ENCODE measurements at regions of chr22 and their contacts with region 1.

Region 1: DNA sequence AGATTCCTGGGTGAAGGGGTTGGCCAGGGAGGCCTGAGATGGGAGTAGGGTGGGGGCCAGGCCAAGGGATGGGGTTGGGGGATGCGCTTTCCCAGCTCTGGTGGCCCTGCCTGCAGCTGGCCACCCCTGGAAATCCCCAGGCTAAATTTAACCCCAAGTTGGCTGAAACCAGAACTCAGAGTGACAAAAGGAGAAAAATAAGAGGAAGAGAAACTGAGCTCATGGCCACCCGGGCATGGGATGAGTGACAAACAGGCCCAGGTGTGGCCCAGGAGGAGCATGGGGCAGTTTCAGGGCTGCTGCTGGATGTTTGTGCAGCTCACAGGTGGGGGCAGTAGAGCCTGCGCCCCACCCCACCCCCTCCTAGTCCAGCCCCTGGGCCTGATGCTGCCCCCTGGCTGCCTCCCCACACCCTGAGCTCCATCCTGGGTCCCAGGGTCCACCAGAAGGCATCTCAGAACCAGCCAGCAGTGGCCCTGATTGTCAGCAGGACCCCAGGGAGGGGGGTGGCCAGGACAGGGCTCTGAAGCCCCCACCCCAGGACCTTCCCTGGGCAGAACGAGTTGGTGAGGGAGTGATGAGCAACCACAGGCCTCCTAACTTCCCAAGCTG is 48.0 kb downstream of the IGLL5 start:
- DNase-seq: no peak
- H3K4me3 ChIP-seq: no peak overlapping the region
- CTCF ChIP-seq: no peak

Region 2: GRCh38 chr22:22893077-22893805 is 42.4 kb before region 1 on chr22:
- in situ Hi-C with region 1: no loop called
- DNase-seq: no peak
- H3K4me3 ChIP-seq: no peak overlapping the region
- CTCF ChIP-seq: no peak

Region 3: GRCh38 chr22:22976033-22976922 is 40.6 kb after region 1 on chr22:
- in situ Hi-C with region 1: no loop called
- DNase-seq: no peak
- H3K4me3 ChIP-seq: no peak overlapping the region
- CTCF ChIP-seq: no peak

Region 4: GRCh38 chr22:22999523-22999922 is 63.9 kb after region 1 on chr22:
- in situ Hi-C with region 1: no loop called
- DNase-seq: no peak
- H3K4me3 ChIP-seq: no peak overlapping the region
- CTCF ChIP-seq: no peak

Region 5: GRCh38 chr22:23113067-23113846 is 177.6 kb after region 1 on chr22:
- in situ Hi-C with region 1: loop called (anchors 10 kb)
- DNase-seq: no peak
- H3K4me3 ChIP-seq: no peak overlapping the region
- CTCF ChIP-seq: no peak

Measured in astrocyte of the cerebellum (primary cell).